Panc1 (cell line): ENCODE measurements at regions of chr22 and their contacts with region 1.

Region 1: GRCh38 chr22:36452250-36452977 is 29.0 kb downstream of the TXN2 start:
- DNase-seq: no peak
- ATAC-seq: no peak
- H3K4me3 ChIP-seq: no peak overlapping the region
- H3K27ac ChIP-seq: peak overlapping the region; percentile 79
- H3K4me1 ChIP-seq: peaks cover 27% of the 10 kb centered on the region
- H3K27me3 ChIP-seq: no peaks in the 10 kb centered on the region
- CTCF ChIP-seq: no peak

Region 2: GRCh38 chr22:36344106-36344827 is 108.1 kb before region 1 on chr22:
- CTCF ChIA-PET with region 1: no interaction called
- POLR2A ChIA-PET with region 1: interaction called, 10 read pairs
- in situ Hi-C with region 1: no loop called
- intact Hi-C with region 1: no loop called
- DNase-seq: no peak
- ATAC-seq: no peak
- H3K4me3 ChIP-seq: no peak overlapping the region
- H3K27ac ChIP-seq: peak overlapping the region; percentile 78
- H3K4me1 ChIP-seq: peaks cover 89% of the 10 kb centered on the region
- H3K27me3 ChIP-seq: no peaks in the 10 kb centered on the region
- CTCF ChIP-seq: no peak